ENCODE measurements at regions of chr14 and their contacts with region 1.

Region 1: GRCh38 chr14:69685716-69686115 is 74.3 kb downstream of the SUSD6 start:
- DNase-seq: peak; percentile 79
- H3K4me3 Mint-ChIP-seq: peak overlapping the region; percentile 75
- H3K27ac Mint-ChIP-seq: peak overlapping the region; percentile 96
- H3K4me1 Mint-ChIP-seq: peaks cover 79% of the 10 kb centered on the region
- H3K27me3 Mint-ChIP-seq: no peaks in the 10 kb centered on the region

Region 2: DNA sequence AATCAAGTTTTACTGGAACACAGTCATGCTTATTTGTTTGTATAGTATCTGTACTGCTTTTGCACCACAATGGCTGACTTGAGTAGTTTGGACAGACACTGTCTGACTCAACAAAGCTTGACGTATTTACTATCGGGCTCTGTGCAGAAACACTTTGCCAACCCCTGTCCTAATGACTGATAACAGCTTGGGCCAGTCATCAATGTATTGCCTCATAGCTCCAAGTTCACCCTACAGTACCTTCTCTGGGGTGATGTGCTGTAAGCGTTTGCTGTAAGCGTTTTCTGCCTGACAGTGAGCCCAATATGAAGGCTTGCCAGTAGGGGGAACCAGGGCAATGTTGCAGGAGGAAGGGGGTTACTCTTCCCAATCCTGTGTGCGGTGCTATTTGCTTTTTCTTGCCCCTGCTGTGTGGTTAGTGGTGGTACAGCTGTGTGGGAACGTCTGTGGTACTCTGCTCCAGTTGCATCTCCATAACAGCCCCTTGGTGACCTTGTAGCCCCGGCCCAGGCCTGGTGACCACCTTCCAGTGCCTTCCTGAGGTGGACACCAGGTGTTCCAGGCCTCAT is 105.6 kb before region 1 on chr14:
- intact Hi-C with region 1: no loop called
- DNase-seq: no peak
- H3K4me3 Mint-ChIP-seq: no peak overlapping the region
- H3K27ac Mint-ChIP-seq: no peak overlapping the region
- H3K4me1 Mint-ChIP-seq: no peaks in the 10 kb centered on the region
- H3K27me3 Mint-ChIP-seq: peaks cover 37% of the 10 kb centered on the region

Region 3: GRCh38 chr14:69625299-69626131 is 60.2 kb before region 1 on chr14:
- intact Hi-C with region 1: no loop called
- DNase-seq: peak; percentile 93
- H3K4me3 Mint-ChIP-seq: peak overlapping the region; percentile 81
- H3K27ac Mint-ChIP-seq: peak overlapping the region; percentile 96
- H3K4me1 Mint-ChIP-seq: peaks cover 80% of the 10 kb centered on the region
- H3K27me3 Mint-ChIP-seq: no peaks in the 10 kb centered on the region

Region 4: DNA sequence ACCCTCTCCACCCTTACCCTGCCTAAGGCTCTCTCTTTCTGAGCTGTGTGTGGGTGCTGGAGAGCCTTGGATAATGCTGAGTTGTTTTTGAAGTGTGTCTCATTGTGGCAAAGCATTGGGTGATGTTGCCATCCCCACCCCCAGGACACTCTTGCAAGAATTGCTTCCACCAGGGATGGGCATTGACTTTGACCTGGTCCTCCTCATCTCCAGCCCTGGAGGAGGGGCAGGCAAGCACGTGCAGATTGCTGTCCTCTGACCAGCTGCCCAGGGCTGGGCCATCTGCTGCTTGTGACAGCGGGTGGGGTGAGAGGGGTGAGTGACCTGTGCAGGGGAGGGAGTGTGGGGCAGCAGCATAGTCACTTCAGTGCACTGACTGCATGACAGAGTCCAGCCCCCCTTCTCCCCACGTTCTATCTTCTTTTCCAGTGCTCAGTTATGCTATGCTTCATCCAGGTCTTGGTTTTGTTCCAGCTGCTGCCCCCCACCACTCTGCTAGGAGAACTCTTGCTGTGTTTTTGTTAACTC is 48.1 kb before region 1 on chr14:
- intact Hi-C with region 1: loop called (anchors 1 kb)
- DNase-seq: peak; percentile 64
- H3K4me3 Mint-ChIP-seq: peak overlapping the region; percentile 73
- H3K27ac Mint-ChIP-seq: peak overlapping the region; percentile 92
- H3K4me1 Mint-ChIP-seq: peaks cover 76% of the 10 kb centered on the region
- H3K27me3 Mint-ChIP-seq: no peaks in the 10 kb centered on the region

Region 5: DNA sequence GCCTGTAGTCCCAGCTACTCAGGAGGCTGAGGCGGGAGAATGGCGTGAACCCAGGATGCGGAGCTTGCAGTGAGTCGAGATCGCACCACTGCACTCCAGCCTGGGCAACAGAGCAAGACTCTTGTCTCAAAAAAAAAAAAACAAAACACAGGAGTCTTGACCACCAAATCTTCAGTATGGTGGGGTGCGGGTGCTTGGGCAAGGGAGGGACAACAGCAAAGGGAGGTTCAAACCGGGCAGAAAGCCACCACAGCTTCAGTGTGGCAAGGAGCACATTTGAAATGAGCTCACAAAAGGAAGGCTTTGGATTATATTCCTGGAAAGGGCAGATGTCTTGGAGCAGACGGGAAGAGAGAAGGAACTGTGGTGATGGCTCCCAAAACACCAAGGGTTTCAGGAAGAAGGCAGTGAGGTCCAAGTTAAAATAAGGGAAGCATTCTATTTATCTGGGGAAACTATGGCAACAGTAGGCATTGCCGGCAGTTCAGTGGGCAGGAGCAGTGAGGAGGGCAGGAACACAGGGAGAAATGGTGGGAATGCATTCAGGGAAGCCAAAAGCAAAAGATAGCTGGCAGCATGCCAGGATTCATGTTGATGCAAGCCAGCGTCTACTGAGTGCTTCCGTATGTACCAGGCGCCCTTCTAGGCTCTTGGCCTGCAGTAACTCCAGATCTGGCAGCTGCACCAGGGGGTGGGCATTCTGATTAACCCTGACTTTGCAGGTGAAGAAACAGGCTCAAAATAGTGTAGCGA is 30.2 kb after region 1 on chr14:
- intact Hi-C with region 1: loop called (anchors 1 kb)
- DNase-seq: peak; percentile 70
- H3K4me3 Mint-ChIP-seq: peak overlapping the region; percentile 65
- H3K27ac Mint-ChIP-seq: peak overlapping the region; percentile 88
- H3K4me1 Mint-ChIP-seq: peaks cover 73% of the 10 kb centered on the region
- H3K27me3 Mint-ChIP-seq: no peaks in the 10 kb centered on the region

Measured in activated CD4-positive, alpha-beta T cell treated with anti-CD3 and anti-CD28 coated beads, Interleukin-2, amount 10 ng/mL, durations not matched to agents 24 days and 14 days (primary cell).